ENCODE measurements at regions of chr12 and their contacts with region 1.

Region 1: DNA sequence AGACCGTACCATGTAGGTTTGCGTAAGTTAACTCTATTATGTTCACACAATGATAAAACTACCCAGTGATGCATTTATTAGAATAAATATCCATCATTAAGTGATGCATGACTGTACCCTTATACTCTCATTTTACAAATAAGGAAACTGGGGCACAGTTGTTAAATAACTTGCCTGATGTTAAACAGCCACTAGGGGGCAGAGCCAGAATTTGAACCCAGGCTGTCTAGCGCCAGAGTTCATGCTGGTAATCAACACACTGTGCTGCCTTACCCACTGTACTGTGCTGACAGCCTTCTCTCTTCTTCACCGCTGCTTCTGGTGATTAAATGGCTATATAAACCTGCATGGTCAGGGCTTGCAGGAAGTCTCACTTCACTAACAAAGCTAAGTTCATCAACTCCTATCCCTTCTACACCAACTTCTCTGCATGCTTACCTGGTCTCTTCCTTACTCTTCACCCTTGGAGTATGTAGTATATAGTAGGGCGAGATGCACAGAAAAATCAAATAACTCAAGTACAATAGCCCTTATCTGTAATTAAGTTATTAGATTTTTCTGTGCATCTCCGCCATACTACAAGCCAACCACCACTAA is 43.6 kb upstream of the APPL2 start:
- DNase-seq: no peak
- H3K4me3 ChIP-seq: no peak overlapping the region
- H3K4me3 Mint-ChIP-seq: no peak overlapping the region
- H3K27ac Mint-ChIP-seq: no peak overlapping the region
- H3K4me1 ChIP-seq: peaks cover 45% of the 10 kb centered on the region
- H3K4me1 Mint-ChIP-seq: peaks cover 30% of the 10 kb centered on the region
- H3K27me3 ChIP-seq: no peaks in the 10 kb centered on the region
- H3K27me3 Mint-ChIP-seq: no peaks in the 10 kb centered on the region
- CTCF ChIP-seq: peak; percentile 13 to 47

Region 2: GRCh38 chr12:105294906-105295479 is 15.4 kb after region 1 on chr12:
- CTCF ChIA-PET with region 1: no interaction called
- POLR2A ChIA-PET with region 1: no interaction called
- intact Hi-C with region 1: loop called (anchors 2 kb)
- DNase-seq: no peak
- H3K4me3 ChIP-seq: no peak overlapping the region
- H3K4me3 Mint-ChIP-seq: no peak overlapping the region
- H3K27ac Mint-ChIP-seq: no peak overlapping the region
- H3K4me1 ChIP-seq: peaks cover 11% of the 10 kb centered on the region
- H3K4me1 Mint-ChIP-seq: peaks cover 7% of the 10 kb centered on the region
- H3K27me3 ChIP-seq: no peaks in the 10 kb centered on the region
- H3K27me3 Mint-ChIP-seq: no peaks in the 10 kb centered on the region
- CTCF ChIP-seq: no peak